IMR-90 (cell line): ENCODE measurements at regions of chr14 and their contacts with region 1.

Region 1: DNA sequence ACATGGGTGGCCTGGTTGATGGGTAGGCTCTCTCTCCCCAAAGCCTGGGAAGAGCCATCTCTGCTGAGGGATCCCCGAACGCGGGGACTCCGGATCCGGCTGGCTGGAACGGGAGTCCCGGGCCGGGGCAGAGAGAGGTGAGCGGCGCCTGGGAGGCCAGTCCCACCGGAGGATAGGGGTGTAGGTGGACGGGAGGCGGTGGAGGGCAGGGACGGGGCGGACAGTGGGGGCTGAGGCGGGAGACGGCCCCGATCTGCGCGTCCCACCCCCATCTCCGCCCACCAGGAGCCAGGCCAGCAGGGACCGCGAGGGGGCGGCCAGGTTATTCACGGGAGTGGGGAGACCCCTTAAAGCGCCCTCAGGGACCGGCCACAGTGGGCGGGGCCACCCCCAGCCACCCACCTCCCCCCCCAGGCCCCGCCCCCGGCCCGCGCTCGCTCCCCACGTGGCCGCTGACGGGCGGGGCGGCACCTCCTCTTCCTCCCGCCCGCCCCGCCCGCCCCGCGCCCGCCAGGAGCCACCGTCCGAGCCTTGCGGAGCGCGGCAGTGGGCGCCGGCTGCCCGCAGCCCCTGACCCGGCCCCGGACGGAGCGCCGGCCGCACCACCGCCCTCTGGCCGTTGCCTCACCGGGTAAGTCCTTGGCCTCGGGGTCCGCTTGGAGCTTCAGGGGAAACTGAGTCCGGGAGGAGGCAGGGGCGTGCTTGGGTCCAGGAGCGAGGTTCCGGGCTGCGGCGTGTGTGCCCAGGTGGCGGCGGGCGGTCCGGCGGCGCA is at the start of gene INF2:
- DNase-seq: peak; percentile 32
- ATAC-seq: peak; percentile 82
- H3K4me3 ChIP-seq: peak within 1 kb of the TSS; percentile 100
- H3K27ac ChIP-seq: peak within 1 kb of the TSS; percentile 88
- H3K4me1 ChIP-seq: peaks cover 34% of the 10 kb centered on the region
- H3K27me3 ChIP-seq: no peaks in the 10 kb centered on the region
- CTCF ChIP-seq: no peak
- POLR2A ChIP-seq: peak; percentile 64; the same call in 1 of the 2 replicates
- RAD21 ChIP-seq: no peak
- total RNA-seq, gene INF2: 16.8 and 20.0 TPM in 2 replicates

Region 2: DNA sequence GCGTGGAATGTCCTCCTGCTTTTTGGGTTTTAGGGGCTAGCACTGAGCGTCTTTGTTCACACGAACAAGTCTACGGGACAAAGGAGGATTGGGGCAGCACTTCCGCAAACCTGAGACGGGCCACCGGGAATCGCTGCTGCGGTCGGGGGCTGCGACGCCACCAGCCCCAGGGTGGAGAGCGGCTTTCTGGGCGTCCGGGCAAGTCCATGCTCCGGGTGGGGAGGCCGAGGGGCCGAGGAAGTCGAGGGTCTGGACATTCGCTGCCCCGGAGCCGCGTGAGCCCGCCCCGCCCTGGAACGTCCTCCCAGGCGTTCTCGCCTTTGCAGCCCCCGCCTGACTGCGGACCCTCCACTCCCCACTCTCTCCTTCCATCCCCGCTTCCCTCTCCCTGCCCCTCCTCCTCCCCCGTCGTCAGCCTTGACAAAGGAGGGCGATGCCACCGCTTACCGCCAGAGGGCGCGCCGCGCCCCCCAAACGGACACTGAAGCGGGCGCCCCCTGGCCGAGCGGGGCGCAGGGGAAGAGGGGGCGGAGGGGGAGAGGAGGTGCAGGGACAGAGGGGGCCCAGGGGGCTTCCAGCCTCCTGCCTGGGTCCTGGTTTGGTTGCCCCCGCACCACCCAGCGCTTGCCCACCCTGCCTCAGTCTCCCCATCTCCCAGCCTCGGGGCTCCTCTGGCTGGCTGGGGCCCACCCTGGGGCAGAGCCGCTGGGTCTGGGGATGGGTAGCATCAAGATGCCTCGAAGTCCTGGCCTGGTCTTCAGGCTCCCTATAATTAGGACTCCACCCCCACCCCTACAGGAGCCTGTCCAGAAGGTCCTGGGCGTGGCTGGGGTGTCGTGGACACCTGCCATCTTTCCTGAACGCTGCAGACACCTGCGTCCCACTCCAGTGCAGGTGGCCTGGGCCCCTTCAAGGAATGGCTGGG is 39.0 kb before region 1 on chr14:
- CTCF ChIA-PET with region 1: no interaction called
- POLR2A ChIA-PET with region 1: no interaction called
- dilution Hi-C with region 1: no loop called
- in situ Hi-C with region 1: no loop called
- intact Hi-C with region 1: loop called (anchors 5 kb)
- DNase-seq: peak; percentile 31
- ATAC-seq: peak; percentile 99
- H3K4me3 ChIP-seq: peak overlapping the region; percentile 41
- H3K27ac ChIP-seq: peak overlapping the region; percentile 1; the same call in 1 of the 2 replicates
- H3K4me1 ChIP-seq: 0 out of 2 replicates have a peak, but pooled peaks cover 2% of the 10 kb centered on the region
- H3K27me3 ChIP-seq: peaks cover 9% of the 10 kb centered on the region
- CTCF ChIP-seq: peak; percentile 98
- POLR2A ChIP-seq: no peak
- RAD21 ChIP-seq: peak; percentile 87

Region 3: DNA sequence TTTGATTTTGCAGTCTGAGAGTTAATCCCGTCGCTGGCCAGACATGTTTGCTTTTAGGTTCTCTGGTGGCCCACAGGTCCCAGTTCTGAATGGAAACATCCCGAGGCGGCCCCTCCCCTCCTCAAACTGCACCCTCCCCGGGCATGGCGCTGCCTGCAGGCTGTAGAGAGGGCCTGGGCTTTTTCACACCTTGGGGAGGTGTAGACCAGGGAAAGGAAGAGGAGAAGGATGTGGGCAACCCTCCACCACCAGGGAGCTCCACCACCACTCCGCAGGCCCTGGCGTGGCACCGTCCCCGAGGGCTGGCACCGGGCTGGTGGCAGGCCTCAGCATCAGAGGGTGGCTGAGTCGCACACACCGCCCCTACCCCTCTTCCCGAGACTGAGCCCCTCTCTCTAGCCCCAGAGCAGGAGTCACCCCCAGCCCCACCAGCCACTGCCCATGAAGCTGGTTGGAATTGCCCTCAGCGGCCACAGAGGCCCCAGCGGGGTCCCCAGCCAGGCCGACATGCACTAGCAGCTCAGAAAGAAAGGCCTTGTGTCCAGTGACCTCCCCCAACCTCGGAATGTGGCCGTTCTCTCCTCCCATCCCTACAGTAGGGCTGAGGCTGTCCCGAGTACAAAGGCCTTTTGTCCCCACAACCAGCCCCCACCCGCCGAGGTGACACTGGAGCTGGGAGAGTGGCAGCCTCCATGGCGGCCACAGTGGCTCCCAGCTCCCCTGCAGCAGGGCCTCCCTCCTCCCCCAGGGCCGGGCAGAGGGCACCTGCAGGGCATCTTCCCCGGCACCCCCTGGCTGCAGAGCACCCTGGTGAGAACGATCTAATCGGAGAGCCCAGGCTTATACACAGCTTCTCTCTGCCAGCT is 23.4 kb before region 1 on chr14:
- CTCF ChIA-PET with region 1: no interaction called
- POLR2A ChIA-PET with region 1: interaction called, 3 read pairs
- dilution Hi-C with region 1: no loop called
- in situ Hi-C with region 1: no loop called
- intact Hi-C with region 1: loop called (anchors 1 kb)
- DNase-seq: no peak
- ATAC-seq: peak; percentile 61
- H3K4me3 ChIP-seq: no peak overlapping the region
- H3K27ac ChIP-seq: no peak overlapping the region
- H3K4me1 ChIP-seq: peaks cover 6% of the 10 kb centered on the region; the same call in 1 of the 2 replicates
- H3K27me3 ChIP-seq: no peaks in the 10 kb centered on the region
- CTCF ChIP-seq: 0 out of 2 replicates have a peak, but pooled peaks have one; percentile 15
- POLR2A ChIP-seq: no peak
- RAD21 ChIP-seq: no peak